Common myeloid progenitor, CD34-positive (primary cell): ENCODE measurements at regions of chr17 and their contacts with region 1.

Region 1: GRCh38 chr17:2222901-2223616 is 80.5 kb downstream of the SMG6 start:
- DNase-seq: no peak
- H3K4me3 ChIP-seq: no peak overlapping the region
- H3K27ac ChIP-seq: no peak overlapping the region
- H3K4me1 ChIP-seq: peaks cover 0 to 4% (median 0%) of the 10 kb centered on the region in 4 experiments
- H3K27me3 ChIP-seq: no peaks in the 10 kb centered on the region

Region 2: GRCh38 chr17:2233441-2233947 is 10.4 kb after region 1 on chr17:
- CTCF ChIA-PET with region 1: interaction called, 23 read pairs
- POLR2A ChIA-PET with region 1: no interaction called
- DNase-seq: no peak
- H3K4me3 ChIP-seq: no peak overlapping the region
- H3K27ac ChIP-seq: no peak overlapping the region
- H3K4me1 ChIP-seq: peaks cover 0 to 12% (median 0%) of the 10 kb centered on the region in 4 experiments
- H3K27me3 ChIP-seq: no peaks in the 10 kb centered on the region

Region 3: GRCh38 chr17:2292100-2292499 is 69.0 kb after region 1 on chr17:
- CTCF ChIA-PET with region 1: no interaction called
- POLR2A ChIA-PET with region 1: no interaction called
- DNase-seq: no peak
- H3K4me3 ChIP-seq: no peak overlapping the region
- H3K27ac ChIP-seq: no peak overlapping the region
- H3K4me1 ChIP-seq: no peaks in the 10 kb centered on the region
- H3K27me3 ChIP-seq: no peaks in the 10 kb centered on the region